Heart right ventricle (tissue), 16 donors: ENCODE measurements at regions of chr16 and their contacts with region 1.

Region 1: DNA sequence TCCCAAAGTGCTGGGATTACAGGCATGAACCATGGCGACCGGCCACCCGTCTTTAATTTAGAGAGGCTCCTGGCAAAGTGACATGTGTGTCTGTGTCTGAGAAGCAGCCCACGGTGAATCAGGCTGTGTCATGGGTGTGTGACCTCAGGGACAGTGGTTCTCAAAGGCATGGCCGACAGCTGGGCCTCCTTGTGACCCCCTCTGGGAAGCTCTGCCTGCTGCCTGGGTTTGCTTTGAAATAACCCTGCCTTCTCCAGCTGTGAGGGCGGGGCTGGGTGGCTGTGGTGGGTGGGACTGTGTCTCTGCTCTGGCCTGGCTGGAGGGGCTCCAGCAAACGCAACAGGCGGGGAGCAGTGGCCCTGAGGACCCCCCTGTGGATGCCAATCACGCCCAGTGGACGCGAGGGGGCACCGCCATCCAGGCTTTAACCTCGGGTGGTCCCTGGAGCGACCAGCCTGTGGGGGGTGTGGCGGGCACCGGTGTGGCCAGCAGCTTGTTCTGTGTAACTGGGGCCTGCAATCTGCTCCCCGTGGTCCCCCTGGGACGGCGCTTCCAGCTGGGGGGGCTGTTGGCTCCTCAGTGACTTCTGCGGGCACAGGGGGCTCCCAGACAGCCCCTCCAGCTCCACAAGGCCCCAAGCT is 8.8 kb upstream of the APRT start:
- DNase-seq: no peak
- ATAC-seq: no peak
- H3K4me3 ChIP-seq: no peak overlapping the region
- H3K27ac ChIP-seq: no peak overlapping the region
- H3K4me1 ChIP-seq: no peaks in the 10 kb centered on the region
- H3K27me3 ChIP-seq: no peaks in the 10 kb centered on the region
- CTCF ChIP-seq: no peak

Region 2: GRCh38 chr16:88836791-88837190 is 16.3 kb after region 1 on chr16:
- intact Hi-C with region 1: loop called in 1 of 10 experiments (anchors 1 kb)
- DNase-seq: no peak
- ATAC-seq: no peak
- H3K4me3 ChIP-seq: no peak overlapping the region
- H3K27ac ChIP-seq: no peak overlapping the region
- H3K4me1 ChIP-seq: peaks cover 0 to 4% (median 0%) of the 10 kb centered on the region in 9 donors
- H3K27me3 ChIP-seq: no peaks in the 10 kb centered on the region
- CTCF ChIP-seq: no peak

Region 3: GRCh38 chr16:88882358-88883030 is 62.0 kb after region 1 on chr16:
- intact Hi-C with region 1: no loop called
- DNase-seq: no peak
- ATAC-seq: no peak
- H3K4me3 ChIP-seq: no peak overlapping the region
- H3K27ac ChIP-seq: no peak overlapping the region
- H3K4me1 ChIP-seq: peaks cover 10 to 22% (median 21%) of the 10 kb centered on the region in 9 donors
- H3K27me3 ChIP-seq: peaks cover 0 to 14% (median 4%) of the 10 kb centered on the region in 7 donors
- CTCF ChIP-seq: no peak